Left cardiac atrium (tissue), 4 donors: ENCODE measurements at regions of chr6 and their contacts with region 1.

Region 1: DNA sequence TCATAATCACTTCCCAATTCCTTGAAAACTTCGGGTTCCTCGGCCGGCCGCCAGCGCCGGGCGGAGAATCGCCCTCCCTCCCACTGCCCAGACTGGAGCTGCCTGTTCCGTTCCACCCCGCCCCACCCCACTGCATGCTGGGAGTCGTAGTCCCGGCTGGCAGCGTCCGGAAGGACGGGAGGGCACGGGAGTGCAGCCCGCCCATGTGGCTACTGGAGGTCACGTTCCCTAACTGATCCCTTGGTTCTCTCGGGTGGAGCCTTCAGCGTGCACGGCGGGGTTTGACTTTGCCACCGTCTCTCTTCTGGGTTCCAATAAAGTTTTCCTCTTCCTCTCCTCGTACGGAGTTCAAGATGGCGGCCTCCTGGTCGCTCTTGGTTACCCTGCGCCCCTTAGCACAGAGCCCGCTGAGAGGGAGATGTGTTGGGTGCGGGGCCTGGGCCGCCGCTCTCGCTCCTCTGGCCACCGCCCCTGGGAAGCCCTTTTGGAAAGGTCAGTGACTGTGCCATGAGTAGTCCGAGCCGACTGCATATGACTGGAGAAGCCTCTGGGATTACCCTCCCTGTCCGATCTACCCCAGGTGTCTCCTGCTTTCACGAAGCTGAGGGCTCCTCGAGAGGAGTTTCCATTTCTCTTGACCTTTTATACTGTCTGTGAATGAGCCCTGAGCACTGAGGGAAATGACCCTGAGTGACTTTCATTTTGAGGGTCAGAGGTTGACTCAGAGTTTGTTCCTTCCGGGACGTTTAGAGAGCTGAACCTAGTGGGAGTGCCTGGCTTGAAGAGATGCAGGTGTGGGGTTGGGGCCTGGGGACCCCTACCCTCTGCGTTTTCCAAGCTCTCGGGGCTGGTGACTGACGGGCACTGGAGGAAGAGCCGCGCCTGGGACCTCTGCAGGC is at the start of gene AFG1L:
- DNase-seq: peak; percentile 95
- ATAC-seq: peak; percentile 99 to 100
- total RNA-seq, gene AFG1L: 10.2 to 10.9 TPM

Region 2: DNA sequence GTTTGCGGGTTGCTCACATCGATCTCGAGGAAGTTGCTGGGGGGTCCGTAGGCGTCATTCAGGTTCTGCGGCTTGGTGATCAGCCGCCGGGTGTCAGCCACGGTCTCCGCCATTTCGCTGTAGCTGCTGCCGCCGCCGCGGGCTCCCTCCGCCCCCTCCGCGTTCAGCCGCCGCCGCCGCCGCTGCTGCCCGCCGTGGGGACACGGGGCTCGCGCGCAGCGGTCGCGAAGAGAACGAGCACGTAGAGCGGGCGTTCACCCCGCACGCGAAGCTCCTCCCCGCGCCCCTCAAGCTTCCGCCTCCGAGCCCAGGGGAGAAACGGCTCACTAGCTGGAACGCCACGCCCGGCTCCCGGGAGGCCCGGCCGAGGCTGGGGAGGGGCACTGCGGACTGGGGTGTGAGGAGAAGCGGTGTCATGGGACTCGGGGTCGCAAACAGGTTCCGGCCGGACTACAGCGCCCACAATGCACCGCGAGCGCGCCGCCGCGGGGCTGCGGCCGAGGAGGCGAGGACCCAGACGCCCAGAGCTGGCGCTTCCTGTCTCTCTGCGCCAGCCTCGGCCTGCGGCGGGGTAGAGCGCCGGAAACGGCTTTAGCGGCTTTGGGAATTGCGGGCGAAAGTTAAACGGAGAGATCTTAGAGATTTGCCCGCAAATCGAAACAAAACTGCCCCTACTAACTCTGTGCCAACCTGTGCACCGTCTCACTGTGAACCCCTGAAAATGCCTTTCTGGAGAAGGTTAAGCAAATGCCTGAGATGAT is 34.0 kb before region 1 on chr6 and contains the start of gene SNX3:
- intact Hi-C with region 1: loop called in 1 of 2 experiments (anchors 2 kb)
- DNase-seq: peak; percentile 96
- ATAC-seq: peak; percentile 97 to 98
- total RNA-seq, gene SNX3: 209 to 255 TPM